Dendritic cell treated with granulocyte-macrophage colony-stimulating factor and Interleukin-4, amounts not matched to agents 40 ng/mL and 50 ng/mL, for 4 days (primary cell): ENCODE measurements at regions of chr6 and their contacts with region 1.

Region 1: GRCh38 chr6:134640975-134641429 is 308.9 kb downstream of the ALDH8A1 start:
- H3K4me3 Mint-ChIP-seq: no peak overlapping the region
- H3K27ac Mint-ChIP-seq: peak overlapping the region; percentile 79
- H3K4me1 Mint-ChIP-seq: peaks cover 21% of the 10 kb centered on the region
- H3K27me3 Mint-ChIP-seq: no peaks in the 10 kb centered on the region

Region 2: GRCh38 chr6:134517145-134517658 is 123.8 kb before region 1 on chr6:
- intact Hi-C with region 1: loop called (anchors 10 kb)
- H3K4me3 Mint-ChIP-seq: no peak overlapping the region
- H3K27ac Mint-ChIP-seq: peak overlapping the region; percentile 79
- H3K4me1 Mint-ChIP-seq: peaks cover 46% of the 10 kb centered on the region
- H3K27me3 Mint-ChIP-seq: no peaks in the 10 kb centered on the region

Region 3: GRCh38 chr6:134822920-134823709 is 182.1 kb after region 1 on chr6:
- intact Hi-C with region 1: loop called (anchors 2 kb)
- H3K4me3 Mint-ChIP-seq: peak overlapping the region; percentile 25
- H3K27ac Mint-ChIP-seq: peak overlapping the region; percentile 61
- H3K4me1 Mint-ChIP-seq: peaks cover 20% of the 10 kb centered on the region
- H3K27me3 Mint-ChIP-seq: peaks cover 2% of the 10 kb centered on the region